ENCODE measurements at regions of chr10 and their contacts with region 1.

Region 1: GRCh38 chr10:76329891-76330575 is 898.6 kb downstream of the LRMDA start:
- DNase-seq: peak; percentile 100
- ATAC-seq: peak; percentile 93
- H3K4me3 ChIP-seq: peak overlapping the region; percentile 10; the same call in 1 of the 2 replicates
- H3K27ac ChIP-seq: peak overlapping the region; percentile 65
- H3K4me1 ChIP-seq: peaks cover 48% of the 10 kb centered on the region
- H3K27me3 ChIP-seq: no peaks in the 10 kb centered on the region
- CTCF ChIP-seq: no peak

Region 2: DNA sequence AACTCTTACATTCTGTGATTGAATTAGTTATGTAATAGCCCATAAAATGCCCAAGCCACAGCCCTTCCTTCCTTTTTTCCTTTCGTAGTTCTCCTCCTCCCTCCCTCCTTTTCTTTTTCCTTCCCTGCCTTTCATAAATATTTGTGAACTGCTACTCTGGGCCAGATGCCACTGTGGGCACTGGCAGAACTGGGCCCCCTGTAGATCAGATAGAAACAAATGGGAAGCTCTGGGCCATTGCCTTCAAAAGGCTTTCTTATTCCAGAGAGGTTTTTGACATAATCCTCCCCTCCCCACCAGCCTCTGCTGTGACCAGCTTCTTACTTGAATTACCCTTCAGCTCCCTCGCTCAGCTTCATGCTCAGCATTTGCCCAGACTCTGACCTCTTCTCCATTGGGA is 11.9 kb before region 1 on chr10:
- CTCF ChIA-PET with region 1: no interaction called
- POLR2A ChIA-PET with region 1: no interaction called
- intact Hi-C with region 1: loop called (anchors 1 kb)
- DNase-seq: no peak
- ATAC-seq: peak; percentile 69
- H3K4me3 ChIP-seq: no peak overlapping the region
- H3K27ac ChIP-seq: no peak overlapping the region
- H3K4me1 ChIP-seq: peaks cover 6% of the 10 kb centered on the region; the same call in 1 of the 2 replicates
- H3K27me3 ChIP-seq: no peaks in the 10 kb centered on the region
- CTCF ChIP-seq: no peak

Region 3: GRCh38 chr10:76352300-76352699 is 22.3 kb after region 1 on chr10:
- CTCF ChIA-PET with region 1: no interaction called
- POLR2A ChIA-PET with region 1: no interaction called
- intact Hi-C with region 1: loop called (anchors 1 kb)
- DNase-seq: peak; percentile 100
- ATAC-seq: peak; percentile 100
- H3K4me3 ChIP-seq: no peak overlapping the region
- H3K27ac ChIP-seq: peak overlapping the region; percentile 59
- H3K4me1 ChIP-seq: peaks cover 23% of the 10 kb centered on the region
- H3K27me3 ChIP-seq: no peaks in the 10 kb centered on the region
- CTCF ChIP-seq: no peak

Region 4: GRCh38 chr10:76902949-76903348 is 572.9 kb after region 1 on chr10:
- CTCF ChIA-PET with region 1: no interaction called
- POLR2A ChIA-PET with region 1: no interaction called
- intact Hi-C with region 1: no loop called
- DNase-seq: peak; percentile 74
- ATAC-seq: peak; percentile 79
- H3K4me3 ChIP-seq: no peak overlapping the region
- H3K27ac ChIP-seq: no peak overlapping the region
- H3K4me1 ChIP-seq: no peaks in the 10 kb centered on the region
- H3K27me3 ChIP-seq: no peaks in the 10 kb centered on the region
- CTCF ChIP-seq: peak; percentile 95

Measured in PC-3 (cell line).